ENCODE measurements at regions of chr4 and their contacts with region 1.

Region 1: DNA sequence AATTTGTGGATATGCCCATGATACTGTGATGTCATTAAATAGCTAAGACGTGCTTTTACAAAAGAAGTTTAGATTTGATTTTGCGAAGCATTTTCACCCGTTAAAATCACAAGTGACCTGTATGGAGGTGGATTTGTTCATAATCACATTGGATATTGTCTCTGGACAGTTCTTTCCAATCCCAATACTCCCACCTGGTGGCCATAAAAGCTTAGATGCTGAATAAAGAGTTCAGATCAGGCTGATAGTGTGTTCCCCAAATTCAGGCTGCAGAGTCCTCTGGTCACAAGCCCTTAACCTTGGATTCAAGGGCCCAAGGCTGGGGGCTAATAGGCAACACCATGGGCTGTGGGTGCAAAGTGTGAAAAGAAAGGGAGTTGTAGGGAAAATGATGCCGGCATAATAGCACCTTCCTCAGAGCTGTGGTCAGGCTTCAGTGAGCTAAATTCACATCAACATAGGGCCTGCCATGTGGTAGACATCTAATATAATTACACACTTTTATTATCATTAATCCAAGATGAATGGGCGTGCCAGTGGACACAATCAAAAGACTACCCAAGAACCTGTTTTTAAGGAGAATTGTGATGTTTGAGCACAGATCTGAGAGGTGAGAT is 28.1 kb downstream of the SMIM43 start:
- DNase-seq: no peak
- H3K4me3 ChIP-seq: no peak overlapping the region
- H3K27ac ChIP-seq: no peak overlapping the region
- H3K27me3 ChIP-seq: no peaks in the 10 kb centered on the region
- CTCF ChIP-seq: peak; percentile 68

Region 2: DNA sequence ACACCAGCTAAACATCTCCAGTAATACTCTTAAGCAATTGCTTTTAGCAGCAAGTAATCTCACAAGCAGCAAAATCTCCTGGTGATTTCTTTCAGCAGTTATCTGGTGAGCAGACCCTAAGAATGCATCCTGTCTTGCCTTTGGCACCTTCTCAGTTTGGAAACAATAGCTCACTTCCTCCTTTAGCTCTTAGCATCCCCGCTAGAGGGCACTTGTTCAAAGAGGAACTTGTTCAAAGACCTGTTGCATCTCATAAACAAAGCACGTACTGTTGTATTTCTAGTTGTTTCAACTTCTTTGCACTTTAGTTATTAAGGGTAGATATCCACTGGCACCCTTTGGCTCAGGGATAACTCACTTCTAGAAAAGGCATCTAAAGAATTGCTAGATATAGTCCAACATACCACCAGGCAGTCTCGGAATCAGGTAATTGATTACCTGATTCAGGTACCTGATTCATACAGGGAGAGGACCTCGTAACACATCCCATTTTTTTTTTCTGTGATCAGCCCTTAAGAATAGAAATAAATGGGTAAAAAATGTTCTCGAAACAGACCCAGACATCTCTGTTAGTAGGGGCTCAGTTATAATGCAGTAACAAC is 274.1 kb before region 1 on chr4:
- CTCF ChIA-PET with region 1: interaction called, 56 read pairs
- POLR2A ChIA-PET with region 1: no interaction called
- DNase-seq: peak; percentile 24
- H3K4me3 ChIP-seq: no peak overlapping the region
- H3K27ac ChIP-seq: no peak overlapping the region
- H3K27me3 ChIP-seq: no peaks in the 10 kb centered on the region
- CTCF ChIP-seq: peak; percentile 80

Region 3: DNA sequence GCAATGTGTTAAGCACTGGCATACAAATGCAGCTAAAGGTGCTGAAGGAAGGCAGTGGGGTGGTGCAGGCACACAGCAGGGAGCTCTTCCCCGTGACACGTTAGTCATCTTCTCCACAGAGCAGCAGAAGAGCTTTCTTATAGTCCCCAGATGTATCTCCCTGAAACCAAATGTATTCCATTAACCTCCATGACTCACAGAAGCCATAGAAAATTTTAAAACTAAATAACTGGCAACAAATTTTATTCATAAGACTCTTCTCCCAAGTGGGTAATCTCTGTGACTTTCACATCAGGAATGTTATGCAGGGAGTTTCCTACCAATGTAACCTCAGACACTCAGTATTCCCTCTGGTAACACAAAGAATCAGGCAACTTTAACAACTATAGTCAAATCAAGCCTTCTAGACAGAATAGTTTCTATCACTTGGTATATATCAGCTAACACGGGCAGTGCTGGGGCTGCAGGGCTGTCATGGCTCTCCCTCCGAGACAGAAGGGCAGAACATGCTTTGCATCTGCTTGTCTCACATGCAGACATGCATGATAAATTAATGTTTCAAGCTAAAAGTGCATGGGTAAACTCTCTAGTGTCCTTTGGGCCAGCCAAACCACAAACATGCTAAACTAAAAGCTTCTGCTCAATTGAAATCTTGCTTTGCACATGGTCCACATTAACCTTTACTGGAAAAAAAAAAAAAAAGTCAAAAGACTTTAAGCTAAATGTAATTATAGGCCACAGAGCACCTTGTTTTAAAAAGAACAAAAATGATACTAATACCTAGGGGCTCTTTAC is 68.3 kb before region 1 on chr4:
- CTCF ChIA-PET with region 1: interaction called, 15 read pairs
- POLR2A ChIA-PET with region 1: interaction called, 3 read pairs
- DNase-seq: peak; percentile 91
- H3K4me3 ChIP-seq: no peak overlapping the region
- H3K27ac ChIP-seq: peak overlapping the region; percentile 98
- H3K27me3 ChIP-seq: no peaks in the 10 kb centered on the region
- CTCF ChIP-seq: no peak

Region 4: GRCh38 chr4:121696581-121697461 is 40.0 kb before region 1 on chr4 and contains the start of gene ANXA5:
- CTCF ChIA-PET with region 1: interaction called, 4 read pairs
- POLR2A ChIA-PET with region 1: interaction called, 15 read pairs
- DNase-seq: peak; percentile 72
- H3K4me3 ChIP-seq: peak within 1 kb of the TSS; percentile 96
- H3K27ac ChIP-seq: peak within 1 kb of the TSS; percentile 98
- H3K27me3 ChIP-seq: no peaks in the 10 kb centered on the region
- CTCF ChIP-seq: peak; percentile 53
- polyA plus RNA-seq, gene ANXA5: 1,739 and 2,093 TPM in 2 replicates

Region 5: DNA sequence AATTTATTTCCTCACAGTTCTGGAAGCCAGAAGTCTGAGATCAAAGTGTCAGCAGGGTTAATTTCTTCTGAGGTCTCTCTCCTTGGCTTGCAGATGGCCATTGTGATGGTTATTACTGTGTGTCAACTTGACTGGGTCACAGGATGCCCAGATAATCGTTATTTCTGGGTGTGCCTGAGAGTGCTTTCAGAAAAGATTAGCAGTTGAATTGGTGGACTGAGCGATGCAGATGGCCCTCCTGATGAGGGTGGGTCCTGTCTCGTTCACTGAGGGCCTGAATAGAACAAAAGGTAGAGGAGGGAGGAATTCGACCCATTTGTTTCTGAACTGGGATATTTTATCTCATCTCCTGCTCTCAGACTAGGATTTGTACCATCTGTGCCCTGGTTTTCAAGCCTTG is 12.4 kb after region 1 on chr4:
- CTCF ChIA-PET with region 1: interaction called, 10 read pairs
- POLR2A ChIA-PET with region 1: no interaction called
- DNase-seq: no peak
- H3K4me3 ChIP-seq: no peak overlapping the region
- H3K27ac ChIP-seq: no peak overlapping the region
- H3K27me3 ChIP-seq: no peaks in the 10 kb centered on the region
- CTCF ChIP-seq: no peak

Region 6: GRCh38 chr4:122003335-122003734 is 266.5 kb after region 1 on chr4:
- CTCF ChIA-PET with region 1: no interaction called
- POLR2A ChIA-PET with region 1: no interaction called
- DNase-seq: no peak
- H3K4me3 ChIP-seq: no peak overlapping the region
- H3K27ac ChIP-seq: no peak overlapping the region
- H3K27me3 ChIP-seq: no peaks in the 10 kb centered on the region
- CTCF ChIP-seq: peak; percentile 30; the same call in 1 of the 2 replicates

Measured in AG04450 (cell line).